ENCODE measurements at regions of chr12 and their contacts with region 1.

Region 1: DNA sequence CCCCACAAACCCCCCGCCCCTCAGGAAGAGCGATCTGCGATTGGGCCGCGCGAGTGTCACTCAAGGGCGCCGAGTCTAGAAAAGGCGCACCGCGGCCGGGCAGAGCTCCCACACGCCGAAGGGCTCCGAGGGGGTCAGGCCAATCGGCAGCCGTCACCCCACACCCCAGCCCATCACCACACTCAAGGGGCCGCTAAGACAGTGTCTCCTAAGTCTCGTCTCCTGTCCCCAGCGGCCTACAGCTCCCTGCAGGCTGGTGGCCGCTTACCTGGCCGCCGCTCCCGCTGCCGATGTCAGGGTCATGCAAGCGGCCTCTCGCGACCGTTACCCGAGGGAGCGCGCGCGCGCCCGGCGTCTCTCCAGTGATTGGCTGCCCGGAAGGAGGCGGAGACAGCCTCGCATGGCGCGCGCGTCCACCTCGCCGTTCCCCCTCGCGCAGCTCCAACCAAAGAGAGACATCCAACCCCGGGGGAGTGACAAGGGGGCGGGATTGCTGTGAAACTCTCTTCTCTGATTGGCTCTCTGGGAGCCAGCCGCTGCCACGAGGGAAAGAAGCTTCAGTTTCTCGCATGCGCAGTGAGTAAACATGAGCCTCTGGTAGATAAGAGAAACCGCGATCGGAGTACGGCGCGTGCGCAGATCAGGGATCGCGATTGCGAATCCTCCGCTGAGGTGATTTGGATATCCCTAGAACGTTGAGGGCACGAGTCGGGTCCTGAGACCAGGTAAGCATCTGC is at the starts of genes MPHOSPH9 and MTRFR:
- H3K4me3 ChIP-seq: peak within 1 kb of the TSS; percentile 90
- H3K27ac ChIP-seq: peak within 1 kb of the TSS; percentile 86
- H3K4me1 ChIP-seq: peaks cover 13% of the 10 kb centered on the region
- CTCF ChIP-seq: no peak

Region 2: GRCh38 chr12:122860346-122861090 is 372.5 kb before region 1 on chr12:
- CTCF ChIA-PET with region 1: interaction called, 13 read pairs
- POLR2A ChIA-PET with region 1: interaction called, 3 read pairs
- H3K4me3 ChIP-seq: no peak overlapping the region
- H3K27ac ChIP-seq: no peak overlapping the region
- H3K4me1 ChIP-seq: no peaks in the 10 kb centered on the region
- CTCF ChIP-seq: peak; percentile 86

Region 3: DNA sequence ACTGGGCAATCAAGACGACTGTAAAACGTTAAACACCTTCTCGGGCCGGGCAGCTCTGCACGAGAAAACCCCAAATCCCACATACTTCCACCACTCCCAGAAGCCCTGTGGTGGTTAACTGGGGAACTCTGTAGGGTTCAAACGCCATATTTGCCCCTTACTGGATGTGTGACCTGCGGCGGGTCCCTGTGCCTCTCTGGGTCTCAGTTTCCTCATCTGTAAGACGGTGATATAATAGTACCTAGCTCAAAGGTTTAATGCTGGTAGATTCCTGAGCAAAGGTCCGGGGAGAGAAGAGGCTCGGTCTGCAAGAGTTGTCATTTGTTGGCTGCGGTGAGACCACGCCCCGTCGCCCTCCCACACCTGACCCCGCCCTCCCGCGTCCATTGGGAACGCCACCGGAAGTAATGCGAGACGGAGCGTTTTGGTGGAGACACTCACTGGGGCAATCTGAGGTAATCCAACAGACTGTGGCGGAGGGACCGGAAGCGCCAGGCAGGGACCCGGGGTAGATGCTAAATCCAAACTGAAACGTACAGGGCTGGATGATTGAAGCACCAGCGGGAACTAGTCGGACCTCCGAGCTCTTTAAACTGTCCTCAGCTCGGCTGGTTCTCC is 258.6 kb before region 1 on chr12:
- CTCF ChIA-PET with region 1: interaction called, 3 read pairs
- POLR2A ChIA-PET with region 1: interaction called, 25 read pairs
- H3K4me3 ChIP-seq: peak overlapping the region; percentile 87
- H3K27ac ChIP-seq: peak overlapping the region; percentile 83
- H3K4me1 ChIP-seq: no peaks in the 10 kb centered on the region
- CTCF ChIP-seq: no peak

Region 4: GRCh38 chr12:123151457-123152454 is 81.2 kb before region 1 on chr12:
- CTCF ChIA-PET with region 1: interaction called, 5 read pairs
- POLR2A ChIA-PET with region 1: interaction called, 15 read pairs
- H3K4me3 ChIP-seq: peak overlapping the region; percentile 60
- H3K27ac ChIP-seq: peak overlapping the region; percentile 70; the same call in 1 of the 2 replicates
- H3K4me1 ChIP-seq: peaks cover 7% of the 10 kb centered on the region; the same call in 1 of the 2 replicates
- CTCF ChIP-seq: no peak

Region 5: DNA sequence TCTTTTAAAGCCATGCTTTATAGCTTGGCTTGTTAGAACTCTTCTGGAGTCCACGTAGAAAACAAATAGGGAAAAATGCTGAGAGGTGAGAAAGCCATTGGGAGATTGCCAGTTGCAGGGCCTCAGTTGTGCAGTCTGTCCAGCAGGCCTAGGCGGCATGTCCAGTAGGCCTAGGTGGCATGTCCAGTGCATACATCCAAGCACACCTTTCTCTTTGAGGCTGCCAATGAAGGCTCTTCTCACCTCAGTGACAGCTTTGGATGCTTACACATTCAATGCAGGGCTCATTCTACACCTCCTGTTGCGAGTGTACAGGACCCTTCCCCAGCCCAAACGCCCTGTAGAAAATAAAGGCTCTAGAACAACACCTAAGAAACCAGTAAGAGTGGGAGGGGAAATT is 25.6 kb after region 1 on chr12:
- CTCF ChIA-PET with region 1: interaction called, 7 read pairs
- POLR2A ChIA-PET with region 1: interaction called, 16 read pairs
- H3K4me3 ChIP-seq: no peak overlapping the region
- H3K27ac ChIP-seq: no peak overlapping the region
- H3K4me1 ChIP-seq: no peaks in the 10 kb centered on the region
- CTCF ChIP-seq: no peak

Region 6: DNA sequence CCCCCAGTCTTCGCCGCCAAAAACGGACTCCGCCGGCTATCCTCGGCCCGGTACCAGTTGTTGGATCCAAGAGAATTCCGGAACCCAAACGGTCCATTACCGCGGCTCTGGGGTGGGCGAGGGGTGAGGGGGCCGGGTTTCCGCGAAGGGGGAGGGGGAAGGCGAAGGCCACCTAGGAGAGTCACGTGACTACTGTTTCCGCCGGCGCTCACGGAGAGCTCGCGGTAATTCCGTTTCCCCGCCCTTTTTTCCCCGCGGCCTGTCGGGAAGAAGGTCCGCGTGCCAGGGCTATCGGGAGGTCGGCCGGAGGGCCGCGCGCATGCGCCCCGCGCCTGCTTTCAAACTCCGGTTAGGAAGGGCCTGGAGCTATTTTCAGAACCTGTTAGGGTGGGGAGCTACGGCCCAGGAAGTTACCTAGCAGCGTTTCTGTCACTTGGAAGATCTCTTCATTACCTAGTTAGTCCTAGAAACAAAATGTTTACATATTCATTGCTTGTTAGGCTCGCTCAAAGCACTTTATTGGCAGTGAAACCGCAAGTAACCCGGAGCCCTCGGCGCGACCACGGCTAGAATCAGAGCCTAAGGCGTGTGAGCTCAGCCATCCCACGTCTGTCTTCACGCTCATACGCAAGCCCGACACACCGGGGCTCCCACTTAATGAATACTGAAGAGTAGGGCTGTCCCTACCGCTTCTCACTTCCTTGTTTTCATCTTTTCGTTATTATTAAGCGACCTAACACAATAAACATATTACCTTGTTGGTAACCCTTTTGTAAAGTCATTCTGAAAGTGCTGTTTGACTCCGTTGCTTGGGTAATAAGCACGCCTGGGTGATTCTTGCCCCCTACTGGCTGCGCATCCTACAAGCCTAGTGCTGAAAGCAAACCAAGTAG is 132.3 kb after region 1 on chr12:
- CTCF ChIA-PET with region 1: interaction called, 5 read pairs
- POLR2A ChIA-PET with region 1: interaction called, 25 read pairs
- H3K4me3 ChIP-seq: peak overlapping the region; percentile 82
- H3K27ac ChIP-seq: peak overlapping the region; percentile 80
- H3K4me1 ChIP-seq: peaks cover 5% of the 10 kb centered on the region; the same call in 1 of the 2 replicates
- CTCF ChIP-seq: peak; percentile 81

Region 7: DNA sequence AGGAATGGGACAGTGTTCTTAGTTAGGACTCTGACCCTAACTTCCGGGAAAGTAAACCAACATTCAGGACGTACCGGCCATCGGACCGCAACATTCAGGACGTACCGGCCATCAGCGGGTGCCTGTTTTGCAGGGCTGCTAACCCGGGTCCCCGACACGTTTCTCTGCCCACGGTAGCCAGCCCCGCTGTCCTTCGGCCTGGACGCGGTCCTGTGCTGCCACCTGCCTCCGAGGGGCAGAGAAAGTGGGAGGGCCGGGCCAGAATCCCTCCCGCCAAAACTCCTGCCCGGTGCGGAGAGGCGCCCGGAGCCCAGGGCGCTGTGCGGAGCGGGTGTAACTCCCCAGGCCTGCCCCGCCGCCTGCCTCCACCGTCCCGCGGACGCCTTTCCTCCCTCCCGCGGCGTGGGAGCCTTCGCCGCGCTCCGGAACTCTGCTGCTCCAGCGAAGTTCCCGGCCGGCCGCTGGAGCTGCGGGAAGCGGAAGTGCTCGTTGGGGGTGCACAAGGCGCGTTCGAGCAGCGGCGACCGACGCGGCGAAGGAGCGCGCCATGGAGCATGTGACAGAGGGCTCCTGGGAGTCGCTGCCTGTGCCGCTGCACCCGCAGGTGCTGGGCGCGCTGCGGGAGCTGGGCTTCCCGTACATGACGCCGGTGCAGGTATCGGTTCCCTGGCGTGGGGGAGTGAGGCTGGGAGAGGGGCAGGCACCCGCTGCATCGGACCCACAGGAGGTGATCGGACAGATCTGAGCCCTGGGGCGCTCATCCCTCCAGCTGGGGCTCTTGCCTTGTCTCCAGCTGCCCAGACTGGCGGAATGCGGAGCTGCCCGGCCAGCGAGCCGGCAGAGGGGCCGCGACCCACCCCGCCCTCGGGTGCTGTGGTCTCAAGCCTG is 368.9 kb after region 1 on chr12 and contains the start of gene DDX55:
- CTCF ChIA-PET with region 1: no interaction called
- POLR2A ChIA-PET with region 1: interaction called, 13 read pairs
- H3K4me3 ChIP-seq: peak within 1 kb of the TSS; percentile 96
- H3K27ac ChIP-seq: peak within 1 kb of the TSS; percentile 69
- H3K4me1 ChIP-seq: no peaks in the 10 kb centered on the region
- CTCF ChIP-seq: peak; percentile 98

Measured in HEK293 (cell line).